Testis (tissue), 5 donors: ENCODE measurements at regions of chr3 and their contacts with region 1.

Region 1: GRCh38 chr3:149717391-149718056 is 34.8 kb downstream of the COMMD2 start:
- DNase-seq: peak; percentile 79
- H3K4me3 ChIP-seq: no peak overlapping the region
- H3K27ac ChIP-seq: no peak overlapping the region
- H3K4me1 ChIP-seq: peaks cover 6% of the 10 kb centered on the region
- H3K27me3 ChIP-seq: no peaks in the 10 kb centered on the region
- CTCF ChIP-seq: peak; percentile 64 to 66 (median 66)
- POLR2A ChIP-seq: no peak

Region 2: DNA sequence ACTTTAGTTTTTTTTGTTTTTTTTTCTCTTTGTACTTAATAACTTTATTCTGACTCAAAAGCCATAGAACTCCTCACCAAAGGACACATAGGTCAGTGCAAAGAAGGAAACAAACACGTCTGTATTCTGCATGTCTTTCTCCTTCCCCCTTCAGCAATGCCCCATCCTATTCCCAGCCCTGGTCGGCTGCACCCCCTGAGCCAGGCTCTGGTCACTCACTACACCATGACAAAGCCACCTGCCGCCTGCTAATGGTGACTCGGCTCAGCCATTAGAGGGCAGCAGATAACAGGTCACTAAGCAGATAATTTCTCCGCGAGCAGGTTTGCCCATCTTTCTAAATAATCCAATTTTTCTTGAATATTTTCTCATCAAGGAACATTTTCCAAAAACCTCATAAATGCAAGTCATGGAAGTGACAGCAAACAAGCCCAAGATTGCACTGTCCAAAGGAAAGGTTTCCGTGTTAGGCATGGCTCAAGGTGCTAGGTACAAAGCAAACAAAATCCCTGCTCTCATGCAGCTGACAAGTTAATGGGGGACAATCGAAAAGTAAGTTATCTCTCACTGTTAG is 205.2 kb before region 1 on chr3:
- intact Hi-C with region 1: loop called (anchors 10 kb)
- DNase-seq: peak; percentile 80
- H3K4me3 ChIP-seq: no peak overlapping the region
- H3K27ac ChIP-seq: no peak overlapping the region
- H3K4me1 ChIP-seq: peaks cover 8% of the 10 kb centered on the region
- H3K27me3 ChIP-seq: no peaks in the 10 kb centered on the region
- CTCF ChIP-seq: peak; percentile 59 to 70 (median 69)
- POLR2A ChIP-seq: no peak

Region 3: DNA sequence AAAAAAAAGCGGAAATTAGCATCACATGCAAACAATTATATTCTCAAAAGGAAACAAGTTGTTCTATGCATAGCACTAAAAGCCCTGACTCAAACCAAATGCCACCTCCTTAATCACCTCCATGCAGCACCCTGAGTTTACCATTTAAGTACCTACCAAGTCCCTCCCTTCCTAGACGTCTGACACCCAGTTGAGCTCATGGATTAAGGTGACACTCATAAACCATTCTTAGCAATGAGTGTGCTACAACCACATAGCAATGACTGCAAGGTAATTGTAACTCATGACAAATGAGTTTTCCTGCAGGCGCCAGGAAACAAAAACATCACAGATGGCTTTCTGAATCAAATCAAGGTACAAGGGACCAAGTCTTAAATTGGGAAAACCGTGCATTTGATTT is 91.7 kb before region 1 on chr3:
- intact Hi-C with region 1: no loop called
- DNase-seq: no peak
- H3K4me3 ChIP-seq: no peak overlapping the region
- H3K27ac ChIP-seq: no peak overlapping the region
- H3K4me1 ChIP-seq: peaks cover 2% of the 10 kb centered on the region
- H3K27me3 ChIP-seq: no peaks in the 10 kb centered on the region
- CTCF ChIP-seq: no peak
- POLR2A ChIP-seq: no peak